ENCODE measurements at regions of chr2 and their contacts with region 1.

Region 1: GRCh38 chr2:230411570-230412370 is 4.2 kb upstream of the SP100 start:
- DNase-seq: peak; percentile 64 to 79 (median 76)
- ATAC-seq: peak; percentile 81
- H3K4me3 ChIP-seq: peak overlapping the region; percentile 42
- H3K27ac ChIP-seq: peak overlapping the region; percentile 70
- H3K4me1 ChIP-seq: peaks cover 16 to 23% of the 10 kb centered on the region in 2 experiments; a peak in 4 of 5 replicates
- H3K27me3 ChIP-seq: no peaks in the 10 kb centered on the region
- CTCF ChIP-seq: no peak
- EP300 ChIP-seq: no peak
- POLR2A ChIP-seq: peak; percentile 64
- RAD21 ChIP-seq: no peak

Region 2: DNA sequence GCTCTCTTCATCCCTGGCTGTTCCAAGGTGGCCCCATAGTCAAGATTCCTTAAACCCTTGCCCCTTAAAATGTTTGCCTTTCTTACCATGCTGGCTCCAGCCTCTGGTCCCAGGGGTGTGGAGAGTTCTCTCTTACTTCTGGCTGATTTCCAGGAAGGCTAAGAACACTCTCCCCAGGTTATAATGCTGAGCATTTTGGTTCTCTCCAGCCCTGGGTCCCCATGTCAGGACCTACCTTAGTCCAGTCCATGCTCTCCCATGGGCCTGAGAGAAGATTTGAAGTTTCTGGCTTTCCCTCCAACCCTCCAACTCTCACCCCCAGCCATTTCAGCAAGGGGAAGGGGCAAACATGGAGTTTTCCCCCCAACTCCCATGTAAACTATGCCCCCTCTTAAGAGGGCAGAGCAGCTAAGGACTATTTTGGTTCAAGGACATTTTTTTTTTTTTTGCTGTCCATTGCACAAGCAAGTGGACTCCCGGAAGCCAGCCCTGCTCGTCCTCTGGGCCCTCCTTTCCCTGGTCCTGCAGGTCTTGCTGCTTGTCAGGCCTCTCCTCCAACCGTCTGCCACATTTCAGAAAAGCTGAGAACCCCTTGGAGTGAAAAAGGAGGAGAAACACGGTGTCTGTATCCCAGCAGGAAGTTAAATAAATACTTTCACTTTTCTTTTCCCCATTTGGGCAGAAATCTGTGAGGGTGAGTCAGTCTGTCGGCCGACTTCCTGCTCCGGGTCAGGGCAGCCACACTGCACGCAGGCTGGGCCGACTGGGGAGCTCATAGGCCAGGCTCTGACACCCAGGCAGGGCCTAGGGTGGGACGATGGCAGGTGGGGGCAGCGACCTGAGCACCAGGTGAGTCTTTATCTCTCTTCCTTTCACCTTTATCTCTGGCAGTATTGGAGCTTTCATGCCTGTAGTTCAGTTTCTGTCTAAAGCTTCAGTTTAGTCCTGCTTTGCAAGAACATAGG is 85.0 kb before region 1 on chr2 and contains the start of gene SP140L:
- CTCF ChIA-PET with region 1: no interaction called
- POLR2A ChIA-PET with region 1: no interaction called
- in situ Hi-C with region 1: no loop called
- intact Hi-C with region 1: loop called (anchors 5 kb)
- DNase-seq: peak; percentile 18 to 68 (median 37)
- ATAC-seq: peak; percentile 86
- H3K4me3 ChIP-seq: peak within 1 kb of the TSS; percentile 34
- H3K27ac ChIP-seq: peak within 1 kb of the TSS; percentile 69
- H3K4me1 ChIP-seq: peaks cover 12 to 16% of the 10 kb centered on the region in 2 experiments; a peak in 4 of 5 replicates
- H3K27me3 ChIP-seq: no peaks in the 10 kb centered on the region
- CTCF ChIP-seq: no peak
- EP300 ChIP-seq: 0 out of 2 replicates have a peak, but pooled peaks have one; percentile 24
- POLR2A ChIP-seq: peak; percentile 65
- RAD21 ChIP-seq: no peak
- polyA plus RNA-seq, gene SP140L: 4.0 to 7.1 TPM

Region 3: GRCh38 chr2:230441227-230441897 is 29.6 kb after region 1 on chr2:
- CTCF ChIA-PET with region 1: no interaction called
- POLR2A ChIA-PET with region 1: no interaction called
- in situ Hi-C with region 1: no loop called
- intact Hi-C with region 1: loop called (anchors 2 kb)
- DNase-seq: no peak
- ATAC-seq: peak; percentile 70
- H3K4me3 ChIP-seq: no peak overlapping the region
- H3K27ac ChIP-seq: peak overlapping the region; percentile 12; the same call in 1 of the 3 replicates
- H3K4me1 ChIP-seq: peaks cover 0 to 8% of the 10 kb centered on the region in 2 experiments; a peak in 1 of 5 replicates
- H3K27me3 ChIP-seq: no peaks in the 10 kb centered on the region
- CTCF ChIP-seq: no peak
- EP300 ChIP-seq: 0 out of 2 replicates have a peak, but pooled peaks have one; percentile 3
- POLR2A ChIP-seq: no peak
- RAD21 ChIP-seq: no peak